CD8-positive, alpha-beta memory T cell (primary cell): ENCODE measurements at regions of chr22 and their contacts with region 1.

Region 1: GRCh38 chr22:31211862-31212730 is at the start of gene LIMK2:
- DNase-seq: peak; percentile 95 to 99 (median 97)
- H3K4me3 ChIP-seq: peak within 1 kb of the TSS; percentile 93
- H3K4me3 Mint-ChIP-seq: peak within 1 kb of the TSS; percentile 82 to 96 (median 87)
- H3K27ac ChIP-seq: peak within 1 kb of the TSS; percentile 69
- H3K27ac Mint-ChIP-seq: peak within 1 kb of the TSS; percentile 89 to 96 (median 93)
- H3K4me1 ChIP-seq: peaks cover 32% of the 10 kb centered on the region
- H3K4me1 Mint-ChIP-seq: peaks cover 42 to 59% (median 49%) of the 10 kb centered on the region in 3 donors
- H3K27me3 ChIP-seq: no peaks in the 10 kb centered on the region
- H3K27me3 Mint-ChIP-seq: no peaks in the 10 kb centered on the region
- total RNA-seq, gene LIMK2: 25.1 to 27.7 TPM

Region 2: GRCh38 chr22:31199183-31199582 is 12.9 kb before region 1 on chr22:
- CTCF ChIA-PET with region 1: interaction called, 19 read pairs
- POLR2A ChIA-PET with region 1: interaction called, 6 read pairs
- DNase-seq: no peak
- H3K4me3 ChIP-seq: no peak overlapping the region
- H3K4me3 Mint-ChIP-seq: no peak overlapping the region
- H3K27ac ChIP-seq: no peak overlapping the region
- H3K27ac Mint-ChIP-seq: peak overlapping the region in 2 of 8 donors; percentile 26 to 29
- H3K4me1 ChIP-seq: no peaks in the 10 kb centered on the region
- H3K4me1 Mint-ChIP-seq: no peaks in the 10 kb centered on the region
- H3K27me3 ChIP-seq: no peaks in the 10 kb centered on the region
- H3K27me3 Mint-ChIP-seq: no peaks in the 10 kb centered on the region

Region 3: DNA sequence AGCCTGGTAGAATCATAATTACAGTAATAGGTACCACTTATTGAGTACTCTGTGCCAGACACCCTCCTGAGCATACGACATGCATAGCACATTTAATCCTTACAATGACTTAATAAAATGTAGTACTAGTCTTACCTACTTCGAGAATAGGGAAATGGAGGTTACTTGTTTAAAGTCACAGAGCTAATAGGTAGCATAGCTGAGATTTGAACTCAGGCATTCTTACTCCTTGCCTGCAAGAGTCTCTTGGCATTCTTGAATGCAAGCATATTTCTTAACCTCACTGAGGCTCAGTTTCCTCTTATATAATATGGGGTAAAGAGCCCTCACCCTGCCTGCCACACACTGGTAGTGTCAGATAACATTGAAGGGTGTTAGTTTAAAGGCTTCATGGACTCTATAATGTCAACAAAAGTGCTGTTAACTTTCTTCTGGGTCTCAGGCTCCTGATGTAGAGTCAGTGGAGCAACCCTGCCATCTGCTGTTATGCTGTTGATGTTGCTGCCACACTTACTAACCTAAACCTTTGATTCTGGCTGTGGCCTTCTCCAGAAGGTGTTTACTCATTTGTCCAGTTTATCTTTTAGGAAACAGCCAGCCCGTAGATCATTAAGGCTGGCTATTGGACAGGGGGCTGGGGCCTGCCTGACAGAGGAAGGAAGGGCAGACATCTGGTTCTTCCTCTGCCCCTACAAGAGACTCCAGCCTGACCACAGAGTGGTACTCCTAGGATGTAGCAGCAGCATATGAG is 18.9 kb after region 1 on chr22:
- CTCF ChIA-PET with region 1: interaction called, 39 read pairs
- POLR2A ChIA-PET with region 1: no interaction called
- DNase-seq: peak; percentile 21 to 66 (median 32)
- H3K4me3 ChIP-seq: no peak overlapping the region
- H3K4me3 Mint-ChIP-seq: peak overlapping the region in 1 of 7 donors; percentile 40
- H3K27ac ChIP-seq: peak overlapping the region; percentile 14
- H3K27ac Mint-ChIP-seq: peak overlapping the region; percentile 8 to 95 (median 60)
- H3K4me1 ChIP-seq: peaks cover 31% of the 10 kb centered on the region
- H3K4me1 Mint-ChIP-seq: peaks cover 29 to 43% (median 35%) of the 10 kb centered on the region in 3 donors
- H3K27me3 ChIP-seq: no peaks in the 10 kb centered on the region
- H3K27me3 Mint-ChIP-seq: no peaks in the 10 kb centered on the region

Region 4: GRCh38 chr22:31262312-31263080 is 50.4 kb after region 1 on chr22:
- CTCF ChIA-PET with region 1: no interaction called
- POLR2A ChIA-PET with region 1: no interaction called
- DNase-seq: no peak
- H3K4me3 ChIP-seq: no peak overlapping the region
- H3K4me3 Mint-ChIP-seq: no peak overlapping the region
- H3K27ac ChIP-seq: no peak overlapping the region
- H3K27ac Mint-ChIP-seq: peak overlapping the region in 2 of 8 donors; percentile 12 to 36
- H3K4me1 ChIP-seq: no peaks in the 10 kb centered on the region
- H3K4me1 Mint-ChIP-seq: peaks cover 0 to 5% (median 0%) of the 10 kb centered on the region in 3 donors
- H3K27me3 ChIP-seq: no peaks in the 10 kb centered on the region
- H3K27me3 Mint-ChIP-seq: no peaks in the 10 kb centered on the region

Region 5: GRCh38 chr22:31272522-31273446 is 60.7 kb after region 1 on chr22:
- CTCF ChIA-PET with region 1: interaction called, 55 read pairs
- POLR2A ChIA-PET with region 1: interaction called, 3 read pairs
- DNase-seq: peak in 3 of 5 donors; percentile 38 to 63 (median 57)
- H3K4me3 ChIP-seq: no peak overlapping the region
- H3K4me3 Mint-ChIP-seq: no peak overlapping the region
- H3K27ac ChIP-seq: no peak overlapping the region
- H3K27ac Mint-ChIP-seq: peak overlapping the region; percentile 55 to 95 (median 80)
- H3K4me1 ChIP-seq: peaks cover 39% of the 10 kb centered on the region
- H3K4me1 Mint-ChIP-seq: peaks cover 41 to 61% (median 43%) of the 10 kb centered on the region in 3 donors
- H3K27me3 ChIP-seq: no peaks in the 10 kb centered on the region
- H3K27me3 Mint-ChIP-seq: no peaks in the 10 kb centered on the region

Region 6: DNA sequence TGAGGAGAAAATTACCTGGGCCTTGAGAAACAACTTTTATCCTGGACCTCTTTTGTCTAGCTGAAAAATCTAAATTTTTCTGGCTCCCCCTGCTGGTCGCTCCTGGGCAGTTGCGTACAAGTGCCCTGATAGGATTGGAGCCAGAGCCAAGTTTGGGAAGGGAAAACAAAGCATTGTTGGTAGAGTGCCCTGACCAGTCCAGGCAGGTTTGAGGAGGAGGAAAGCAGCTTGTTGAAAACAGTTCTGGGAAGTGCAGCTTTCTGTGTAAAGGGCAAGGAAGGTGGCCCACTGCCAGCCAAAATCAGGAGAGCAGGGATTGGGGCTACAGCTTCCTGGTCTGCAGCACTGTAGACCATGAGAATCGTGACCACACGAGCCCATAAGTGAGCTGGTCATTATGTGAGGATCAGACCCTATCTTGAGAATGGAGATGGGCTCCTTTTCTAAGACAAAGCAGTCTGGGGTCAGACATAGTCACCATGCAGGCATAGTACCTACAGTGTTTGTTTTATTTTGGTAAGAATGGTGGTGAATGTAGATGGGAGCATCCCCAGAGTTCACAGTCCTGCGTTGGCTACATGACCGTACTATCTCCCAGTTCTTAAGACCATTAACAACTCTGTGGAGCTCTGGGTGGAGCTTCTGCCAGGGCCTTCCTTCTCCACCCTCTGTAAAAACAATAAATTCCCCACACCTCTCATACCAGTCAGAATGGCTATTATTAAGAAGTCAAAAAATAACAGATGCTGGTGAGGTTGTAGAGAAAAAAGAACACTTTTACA is 101.5 kb after region 1 on chr22:
- CTCF ChIA-PET with region 1: interaction called, 20 read pairs
- POLR2A ChIA-PET with region 1: no interaction called
- DNase-seq: peak; percentile 45 to 71 (median 51)
- H3K4me3 ChIP-seq: no peak overlapping the region
- H3K4me3 Mint-ChIP-seq: no peak overlapping the region
- H3K27ac ChIP-seq: no peak overlapping the region
- H3K27ac Mint-ChIP-seq: peak overlapping the region in 6 of 8 donors; percentile 2 to 74 (median 8)
- H3K4me1 ChIP-seq: peaks cover 17% of the 10 kb centered on the region
- H3K4me1 Mint-ChIP-seq: peaks cover 6 to 15% (median 10%) of the 10 kb centered on the region in 3 donors
- H3K27me3 ChIP-seq: no peaks in the 10 kb centered on the region
- H3K27me3 Mint-ChIP-seq: no peaks in the 10 kb centered on the region

Region 7: DNA sequence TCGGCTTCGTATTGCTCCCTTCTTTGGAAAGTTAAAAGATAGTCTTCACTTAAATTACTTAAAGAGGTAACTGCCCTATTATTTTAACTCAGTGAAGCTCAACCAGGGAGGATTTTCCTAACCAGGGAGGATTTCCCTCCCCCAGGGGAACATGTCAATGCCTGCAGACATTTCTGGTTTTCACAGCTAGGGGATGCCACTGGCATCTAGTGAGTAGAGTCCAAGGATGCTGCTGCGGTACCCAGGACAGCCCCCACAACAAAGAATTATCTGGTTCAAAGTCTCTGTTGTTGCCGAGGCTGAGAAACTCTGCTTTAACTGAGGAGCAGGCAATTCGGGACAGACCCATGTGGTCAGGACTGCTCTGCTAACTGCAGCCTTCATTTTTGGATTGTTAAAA is 623.9 kb after region 1 on chr22:
- CTCF ChIA-PET with region 1: no interaction called
- POLR2A ChIA-PET with region 1: no interaction called
- DNase-seq: no peak
- H3K4me3 ChIP-seq: no peak overlapping the region
- H3K4me3 Mint-ChIP-seq: no peak overlapping the region
- H3K27ac ChIP-seq: no peak overlapping the region
- H3K27ac Mint-ChIP-seq: peak overlapping the region in 1 of 8 donors; percentile 68
- H3K4me1 ChIP-seq: no peaks in the 10 kb centered on the region
- H3K4me1 Mint-ChIP-seq: peaks cover 0 to 4% (median 0%) of the 10 kb centered on the region in 3 donors
- H3K27me3 ChIP-seq: no peaks in the 10 kb centered on the region
- H3K27me3 Mint-ChIP-seq: no peaks in the 10 kb centered on the region